Psoas muscle (tissue), 8 donors: ENCODE measurements at regions of chr16 and their contacts with region 1.

Region 1: DNA sequence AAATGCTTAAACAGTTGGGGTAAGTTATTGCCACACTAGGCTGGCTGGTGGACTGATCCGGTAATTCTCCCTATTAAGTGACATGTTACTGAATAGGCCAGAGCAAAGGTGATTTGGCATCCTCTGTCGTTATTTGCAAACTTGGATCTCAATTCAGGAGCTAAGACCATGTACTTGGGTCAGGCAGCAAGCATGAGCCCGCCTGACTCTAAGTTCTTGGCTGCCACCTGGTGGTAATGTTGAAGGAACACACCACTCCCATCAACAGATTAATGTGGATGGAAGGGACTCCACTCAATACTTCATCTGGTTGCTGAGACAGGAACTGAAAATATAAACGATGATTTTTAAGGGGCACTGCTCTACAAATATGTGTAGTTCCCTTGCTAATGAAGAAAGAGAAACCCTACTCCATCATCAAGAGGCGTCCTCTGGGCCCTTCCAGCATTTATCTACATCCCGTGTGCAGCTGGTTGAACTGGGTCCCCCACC is 70.8 kb downstream of the EMP2 start:
- DNase-seq: no peak
- ATAC-seq: peak; percentile 87 to 96 (median 90)
- H3K4me3 ChIP-seq: no peak overlapping the region
- H3K27ac ChIP-seq: no peak overlapping the region
- H3K4me1 ChIP-seq: peaks cover 10% of the 10 kb centered on the region
- H3K27me3 ChIP-seq: no peaks in the 10 kb centered on the region
- CTCF ChIP-seq: peak; percentile 79

Region 2: GRCh38 chr16:8567750-8568617 is 1941.6 kb before region 1 on chr16:
- intact Hi-C with region 1: loop called in 1 of 2 experiments (anchors 2 kb)
- DNase-seq: peak; percentile 61 to 70
- ATAC-seq: peak; percentile 67 to 88 (median 84)
- H3K4me3 ChIP-seq: no peak overlapping the region
- H3K27ac ChIP-seq: no peak overlapping the region
- H3K4me1 ChIP-seq: no peaks in the 10 kb centered on the region
- H3K27me3 ChIP-seq: peaks cover 0 to 29% (median 5%) of the 10 kb centered on the region in 3 donors
- CTCF ChIP-seq: peak; percentile 96

Region 3: DNA sequence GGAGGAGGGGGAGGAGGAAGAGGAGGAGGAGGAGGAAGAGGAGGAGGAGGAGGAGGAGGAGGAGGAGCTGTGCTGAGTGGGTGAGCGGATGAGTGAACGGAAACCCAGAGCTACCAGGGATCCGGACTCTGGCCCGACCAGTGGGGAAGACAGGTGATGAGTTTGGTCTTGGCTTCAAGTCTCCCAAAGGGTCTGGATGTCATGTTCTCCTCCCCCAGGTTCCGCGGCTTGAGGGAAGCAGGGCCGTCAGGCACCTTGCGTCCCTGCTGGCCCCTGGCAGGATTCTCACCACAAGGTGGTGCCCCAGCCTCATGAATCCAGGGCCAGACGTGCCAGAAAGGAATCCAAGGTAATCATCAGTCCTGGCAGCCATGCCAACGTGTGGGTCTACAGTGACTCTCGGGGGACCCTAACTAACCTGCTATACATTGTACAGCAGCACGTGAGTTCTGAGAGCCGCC is 1848.7 kb before region 1 on chr16:
- intact Hi-C with region 1: loop called in 1 of 2 experiments (anchors 5 kb)
- DNase-seq: peak; percentile 53 to 74
- ATAC-seq: peak; percentile 73 to 90 (median 83)
- H3K4me3 ChIP-seq: no peak overlapping the region
- H3K27ac ChIP-seq: no peak overlapping the region
- H3K4me1 ChIP-seq: no peaks in the 10 kb centered on the region
- H3K27me3 ChIP-seq: no peaks in the 10 kb centered on the region
- CTCF ChIP-seq: peak; percentile 62

Region 4: DNA sequence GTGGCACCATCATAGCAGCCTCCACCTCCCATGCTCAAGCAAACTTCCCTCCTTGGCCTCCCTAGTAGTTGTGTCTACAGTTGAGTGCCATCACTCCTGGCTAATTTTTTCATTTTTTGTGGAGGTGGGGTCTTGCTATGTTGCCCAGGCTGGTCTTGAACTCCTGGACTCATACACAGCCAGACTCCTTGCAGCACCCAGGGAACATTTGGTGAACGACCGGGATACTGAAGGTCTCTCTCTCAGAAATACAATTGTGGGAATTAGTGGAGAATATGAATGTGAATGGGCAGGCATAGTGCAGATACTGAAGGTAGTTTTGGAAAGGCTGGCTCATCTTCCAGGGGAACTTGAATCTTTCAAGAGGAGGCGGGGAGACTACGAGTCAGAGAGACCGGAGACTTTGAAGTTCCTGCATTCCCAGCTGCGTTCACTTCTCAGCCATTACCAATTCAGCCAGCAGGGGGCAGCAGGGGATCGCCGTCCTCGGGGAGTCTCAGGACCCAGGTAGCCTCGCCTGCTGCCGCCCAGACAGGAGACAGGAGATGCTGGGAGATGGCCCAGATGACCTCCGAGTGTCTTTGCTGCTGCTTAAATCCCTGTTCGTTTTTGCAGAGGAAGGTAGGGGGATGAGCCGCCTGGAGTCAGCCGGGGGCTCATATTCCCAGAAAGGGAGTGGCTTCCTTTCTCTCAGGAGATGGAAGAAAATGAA is 1349.6 kb before region 1 on chr16:
- intact Hi-C with region 1: loop called in 1 of 2 experiments (anchors 5 kb)
- DNase-seq: no peak
- ATAC-seq: peak in 1 of 4 donors; percentile 53
- H3K4me3 ChIP-seq: no peak overlapping the region
- H3K27ac ChIP-seq: no peak overlapping the region
- H3K4me1 ChIP-seq: no peaks in the 10 kb centered on the region
- H3K27me3 ChIP-seq: no peaks in the 10 kb centered on the region
- CTCF ChIP-seq: peak; percentile 67

Region 5: GRCh38 chr16:10256784-10257641 is 252.6 kb before region 1 on chr16:
- intact Hi-C with region 1: loop called (anchors 2 to 5 kb)
- DNase-seq: peak in 1 of 2 donors; percentile 26
- ATAC-seq: peak in 2 of 4 donors; percentile 57 to 65
- H3K4me3 ChIP-seq: no peak overlapping the region
- H3K27ac ChIP-seq: no peak overlapping the region
- H3K4me1 ChIP-seq: no peaks in the 10 kb centered on the region
- H3K27me3 ChIP-seq: no peaks in the 10 kb centered on the region
- CTCF ChIP-seq: peak; percentile 57

Region 6: GRCh38 chr16:10314811-10315210 is 194.8 kb before region 1 on chr16:
- intact Hi-C with region 1: loop called in 1 of 2 experiments (anchors 5 kb)
- DNase-seq: no peak
- ATAC-seq: no peak
- H3K4me3 ChIP-seq: no peak overlapping the region
- H3K27ac ChIP-seq: no peak overlapping the region
- H3K4me1 ChIP-seq: no peaks in the 10 kb centered on the region
- H3K27me3 ChIP-seq: no peaks in the 10 kb centered on the region
- CTCF ChIP-seq: no peak

Region 7: DNA sequence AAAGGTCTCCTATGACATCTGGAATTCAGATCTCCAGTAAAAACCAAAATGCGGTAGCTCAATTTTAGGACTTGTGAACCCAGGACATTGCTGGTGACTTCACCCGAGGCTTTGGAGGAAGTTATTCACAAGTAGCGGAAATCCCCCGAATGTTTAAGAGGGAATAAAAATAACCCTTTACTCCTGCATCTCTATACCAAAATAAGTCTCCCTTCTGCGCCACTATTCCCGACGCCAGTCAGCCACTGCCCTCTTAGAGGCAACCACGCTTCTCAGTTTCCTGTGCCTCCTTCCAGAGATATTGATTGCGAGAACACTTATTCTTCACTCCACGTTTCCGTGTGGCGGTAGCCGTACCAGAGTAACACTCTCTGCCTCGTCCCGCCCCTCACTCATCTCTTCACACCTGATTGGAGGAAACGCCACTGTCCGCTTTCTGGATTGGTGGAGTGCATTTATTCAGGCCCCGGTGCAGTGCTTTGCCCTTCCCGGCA is 43.5 kb after region 1 on chr16:
- intact Hi-C with region 1: no loop called
- DNase-seq: peak; percentile 35 to 61
- ATAC-seq: peak; percentile 53 to 78 (median 64)
- H3K4me3 ChIP-seq: peak overlapping the region; percentile 6
- H3K27ac ChIP-seq: peak overlapping the region; percentile 64
- H3K4me1 ChIP-seq: peaks cover 19% of the 10 kb centered on the region
- H3K27me3 ChIP-seq: no peaks in the 10 kb centered on the region
- CTCF ChIP-seq: no peak

Region 8: GRCh38 chr16:10737068-10737625 is 227.6 kb after region 1 on chr16:
- intact Hi-C with region 1: loop called in 1 of 2 experiments (anchors 2 kb)
- DNase-seq: no peak
- ATAC-seq: peak; percentile 53 to 78 (median 60)
- H3K4me3 ChIP-seq: peak overlapping the region; percentile 19
- H3K27ac ChIP-seq: peak overlapping the region; percentile 94
- H3K4me1 ChIP-seq: peaks cover 20% of the 10 kb centered on the region
- H3K27me3 ChIP-seq: no peaks in the 10 kb centered on the region
- CTCF ChIP-seq: peak; percentile 99